Dendritic cell treated with granulocyte-macrophage colony-stimulating factor and Interleukin-4, amounts not matched to agents 40 ng/mL and 50 ng/mL, for 4 days (primary cell): ENCODE measurements at regions of chr5 and their contacts with region 1.

Region 1: DNA sequence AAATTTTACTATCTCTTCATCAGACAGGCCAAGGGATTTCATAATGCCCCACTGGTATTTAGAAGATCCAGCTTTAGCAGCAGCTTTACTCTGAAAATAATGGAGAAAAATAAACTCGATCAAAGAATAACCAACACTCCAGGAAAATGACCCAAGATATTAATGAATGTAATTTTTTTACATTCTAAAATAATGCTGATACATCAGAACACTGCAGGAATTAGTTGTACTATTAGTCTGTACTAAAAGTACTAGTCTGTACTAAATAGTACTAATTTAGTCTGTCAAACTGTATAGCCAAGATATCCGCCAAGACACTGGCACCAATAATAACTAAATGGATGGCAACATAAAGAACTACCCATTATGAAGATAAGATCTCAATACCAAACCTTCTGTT is 18.1 kb downstream of the LARS1 start:
- H3K4me3 Mint-ChIP-seq: no peak overlapping the region
- H3K27ac Mint-ChIP-seq: no peak overlapping the region
- H3K4me1 Mint-ChIP-seq: no peaks in the 10 kb centered on the region
- H3K27me3 Mint-ChIP-seq: no peaks in the 10 kb centered on the region

Region 2: DNA sequence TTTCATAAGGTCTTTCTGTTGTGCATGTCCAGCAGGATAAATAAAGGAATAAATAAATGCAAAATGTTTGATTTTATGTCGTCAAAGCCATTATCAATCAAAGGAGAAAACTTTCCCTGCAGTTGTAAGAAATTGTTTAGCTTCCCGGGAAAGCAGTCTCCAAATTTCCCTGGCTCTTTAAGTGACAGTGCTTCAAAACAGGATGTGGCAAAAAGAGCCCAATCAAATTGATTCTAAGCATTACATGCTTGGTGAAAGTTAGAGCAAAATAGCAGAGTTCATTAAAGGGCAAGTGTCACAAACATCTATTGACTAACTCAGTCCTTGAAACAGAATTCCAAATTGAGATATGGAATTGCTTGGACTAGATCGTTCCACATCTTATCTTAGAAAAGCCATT is 1033.4 kb before region 1 on chr5:
- intact Hi-C with region 1: no loop called
- H3K4me3 Mint-ChIP-seq: no peak overlapping the region
- H3K27ac Mint-ChIP-seq: no peak overlapping the region
- H3K4me1 Mint-ChIP-seq: no peaks in the 10 kb centered on the region
- H3K27me3 Mint-ChIP-seq: no peaks in the 10 kb centered on the region

Region 3: DNA sequence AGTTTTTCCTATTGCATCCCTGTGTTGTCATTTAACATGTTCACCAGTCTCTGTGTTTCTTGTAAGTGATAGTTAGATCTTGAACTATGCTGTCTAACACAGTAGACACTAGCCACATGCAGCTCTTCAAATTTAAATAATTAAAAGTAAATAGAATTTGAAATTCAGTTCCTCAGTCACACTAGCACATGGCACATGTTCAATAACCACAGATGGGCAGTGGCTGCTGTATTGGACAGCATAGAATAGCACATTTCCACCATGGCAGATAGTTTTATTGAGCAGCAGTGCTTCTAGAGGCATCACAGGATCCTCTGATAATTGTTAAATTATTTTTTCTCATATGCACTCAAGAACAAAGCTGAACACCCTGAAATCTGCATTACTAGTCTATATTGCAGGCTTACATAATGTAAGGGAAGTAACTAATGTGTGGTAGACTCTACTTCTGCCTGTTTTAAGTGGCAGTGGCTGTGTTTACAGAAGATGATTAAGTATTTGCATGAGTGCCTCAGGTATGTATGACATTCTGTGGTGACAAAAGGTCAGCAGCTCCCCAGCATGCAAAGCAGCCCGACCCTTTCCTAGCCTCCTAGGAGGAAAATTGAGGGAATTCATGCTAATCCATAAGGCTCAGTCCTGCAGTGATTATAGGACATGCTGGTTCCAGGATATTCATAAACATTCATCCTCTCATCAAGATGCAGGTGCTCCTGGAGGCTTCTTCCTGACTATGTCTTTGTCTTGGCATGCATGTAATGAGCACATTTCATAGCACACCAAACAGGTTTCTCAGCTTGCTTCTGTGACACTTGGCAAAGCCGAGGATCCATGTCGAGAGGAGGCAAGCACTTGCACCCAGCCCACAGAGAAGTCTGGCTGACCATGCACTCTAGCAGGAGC is 182.5 kb before region 1 on chr5:
- intact Hi-C with region 1: no loop called
- H3K4me3 Mint-ChIP-seq: no peak overlapping the region
- H3K27ac Mint-ChIP-seq: no peak overlapping the region
- H3K4me1 Mint-ChIP-seq: peaks cover 45% of the 10 kb centered on the region
- H3K27me3 Mint-ChIP-seq: peaks cover 2% of the 10 kb centered on the region

Region 4: DNA sequence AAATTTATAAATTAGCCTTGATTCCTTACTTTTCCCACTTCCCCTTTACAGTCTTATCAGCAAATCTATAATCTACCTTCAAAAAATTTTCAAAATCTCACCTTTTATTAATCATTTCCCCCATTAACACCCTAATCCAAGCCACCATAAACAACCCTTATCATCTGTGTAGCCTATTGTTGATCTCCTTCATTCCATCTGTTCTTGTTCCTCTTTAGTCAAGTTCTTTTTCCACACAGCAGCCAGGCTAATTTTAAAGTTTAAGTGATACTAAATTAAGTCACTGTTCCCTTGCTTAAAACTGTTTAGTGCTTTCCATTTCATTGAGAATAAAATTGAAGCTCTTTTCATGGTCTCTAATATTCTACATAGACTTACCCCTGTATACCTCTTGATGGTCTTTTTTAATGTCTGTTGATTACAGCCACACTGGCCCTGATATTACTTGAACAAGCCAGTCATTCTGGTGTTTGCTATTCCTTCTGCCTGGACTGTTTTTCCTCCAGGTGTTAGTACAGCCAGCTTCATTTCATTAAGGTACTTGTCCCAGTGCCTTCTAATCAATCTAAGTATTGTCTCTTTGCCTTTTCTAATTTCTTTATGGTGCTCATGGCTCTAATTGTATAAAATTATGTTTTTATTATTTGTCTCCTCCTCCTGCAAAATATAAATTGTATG is 320.5 kb after region 1 on chr5:
- intact Hi-C with region 1: loop called (anchors 5 kb)
- H3K4me3 Mint-ChIP-seq: no peak overlapping the region
- H3K27ac Mint-ChIP-seq: no peak overlapping the region
- H3K4me1 Mint-ChIP-seq: no peaks in the 10 kb centered on the region
- H3K27me3 Mint-ChIP-seq: no peaks in the 10 kb centered on the region

Region 5: GRCh38 chr5:146516151-146516475 is 351.7 kb after region 1 on chr5 and contains the start of gene GPR151:
- intact Hi-C with region 1: no loop called
- H3K4me3 Mint-ChIP-seq: no peak within 1 kb of the TSS
- H3K27ac Mint-ChIP-seq: no peak within 1 kb of the TSS
- H3K4me1 Mint-ChIP-seq: peaks cover 5% of the 10 kb centered on the region
- H3K27me3 Mint-ChIP-seq: no peaks in the 10 kb centered on the region